ENCODE measurements at regions of chr3 and their contacts with region 1.

Region 1: DNA sequence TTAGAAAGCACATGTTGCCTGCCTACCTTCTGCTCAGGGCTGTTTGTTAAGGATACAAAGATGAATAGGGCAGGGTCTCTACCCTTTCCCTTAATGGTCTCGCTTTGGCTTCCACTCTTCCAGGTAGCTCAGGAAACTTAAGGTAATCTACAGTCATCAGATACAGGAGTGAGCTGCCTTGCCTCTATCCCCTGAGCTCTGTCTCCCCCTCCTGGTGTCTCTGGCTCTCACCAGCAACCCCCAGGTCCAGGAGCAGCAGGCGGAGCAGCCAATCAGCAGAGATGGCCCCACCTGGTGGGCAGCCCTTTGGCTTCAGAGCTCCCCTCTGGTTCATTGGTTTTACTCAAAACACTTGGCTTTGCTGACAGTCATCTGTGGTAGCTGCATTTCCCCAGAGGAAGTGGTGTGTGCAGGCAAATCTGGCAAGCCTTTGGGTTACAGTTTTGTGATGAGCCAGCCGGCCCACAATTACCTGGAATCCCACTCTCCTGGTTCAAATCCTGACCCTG is 8.5 kb upstream of the CX3CR1 start:
- DNase-seq: peak; percentile 90 to 91
- H3K4me3 ChIP-seq: no peak overlapping the region
- H3K27ac ChIP-seq: no peak overlapping the region
- H3K4me1 ChIP-seq: no peaks in the 10 kb centered on the region
- H3K27me3 ChIP-seq: no peaks in the 10 kb centered on the region
- CTCF ChIP-seq: peak; percentile 93 to 99 (median 99)
- EP300 ChIP-seq: no peak
- POLR2A ChIP-seq: no peak
- RAD21 ChIP-seq: peak; percentile 100

Region 2: GRCh38 chr3:39101022-39101689 is 187.2 kb before region 1 on chr3:
- CTCF ChIA-PET with region 1: interaction called, 106 read pairs
- POLR2A ChIA-PET with region 1: interaction called, 3 read pairs
- DNase-seq: peak in 1 of 2 experiments; percentile 58
- H3K4me3 ChIP-seq: no peak overlapping the region
- H3K27ac ChIP-seq: no peak overlapping the region
- H3K4me1 ChIP-seq: no peaks in the 10 kb centered on the region; a peak in 2 of 7 replicates
- H3K27me3 ChIP-seq: peaks cover 0 to 1% (median 0%) of the 10 kb centered on the region in 4 experiments; a peak in 1 of 7 replicates
- CTCF ChIP-seq: peak; percentile 80 to 94 (median 86)
- EP300 ChIP-seq: no peak
- POLR2A ChIP-seq: no peak
- RAD21 ChIP-seq: peak; percentile 70 to 77

Region 3: DNA sequence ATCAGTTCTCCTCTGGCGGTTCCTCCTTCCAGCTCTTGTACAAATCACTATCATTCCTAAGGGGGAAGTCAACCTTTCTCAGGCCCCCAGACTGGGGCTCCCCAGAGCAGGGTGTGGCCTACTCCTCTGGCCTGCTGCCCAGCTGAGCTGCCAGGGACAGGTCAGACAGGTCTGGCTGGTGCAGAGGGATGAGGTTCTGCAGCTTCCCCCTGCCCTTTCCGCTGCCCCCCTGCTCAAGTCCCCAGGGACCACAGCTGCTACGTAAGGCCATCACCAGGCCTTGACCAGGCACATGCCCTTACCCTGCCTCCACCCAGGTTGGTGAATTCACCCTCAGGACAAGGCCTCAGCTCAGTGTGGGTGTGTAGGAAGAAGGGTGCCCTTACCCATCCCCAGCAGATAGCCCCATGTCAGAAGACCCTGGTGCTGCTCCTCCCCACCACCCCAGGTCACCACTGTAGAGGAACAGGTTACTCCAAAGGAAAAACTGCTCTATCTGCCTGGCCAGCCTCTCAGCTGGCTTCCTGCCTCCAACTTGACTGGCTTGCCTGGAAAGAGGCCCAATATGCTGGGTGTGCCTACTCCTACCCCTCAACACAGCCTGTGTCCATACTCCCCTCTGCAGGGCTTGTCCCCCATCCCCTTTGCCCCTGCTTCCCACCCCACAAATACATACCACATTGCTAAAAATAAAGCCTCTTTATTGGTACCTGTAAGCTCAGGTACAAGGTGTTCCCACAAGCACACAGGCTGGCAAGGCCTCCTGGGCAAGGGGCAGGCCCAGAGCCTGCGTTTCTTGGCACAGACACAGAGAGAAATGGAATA is 147.0 kb before region 1 on chr3:
- CTCF ChIA-PET with region 1: interaction called, 43 read pairs
- POLR2A ChIA-PET with region 1: no interaction called
- DNase-seq: no peak
- H3K4me3 ChIP-seq: no peak overlapping the region
- H3K27ac ChIP-seq: no peak overlapping the region; the same call in 1 of the 2 replicates
- H3K4me1 ChIP-seq: peaks cover 0 to 3% (median 0%) of the 10 kb centered on the region in 4 experiments; a peak in 2 of 7 replicates
- H3K27me3 ChIP-seq: no peaks in the 10 kb centered on the region
- CTCF ChIP-seq: no peak
- EP300 ChIP-seq: no peak
- POLR2A ChIP-seq: no peak
- RAD21 ChIP-seq: no peak

Region 4: DNA sequence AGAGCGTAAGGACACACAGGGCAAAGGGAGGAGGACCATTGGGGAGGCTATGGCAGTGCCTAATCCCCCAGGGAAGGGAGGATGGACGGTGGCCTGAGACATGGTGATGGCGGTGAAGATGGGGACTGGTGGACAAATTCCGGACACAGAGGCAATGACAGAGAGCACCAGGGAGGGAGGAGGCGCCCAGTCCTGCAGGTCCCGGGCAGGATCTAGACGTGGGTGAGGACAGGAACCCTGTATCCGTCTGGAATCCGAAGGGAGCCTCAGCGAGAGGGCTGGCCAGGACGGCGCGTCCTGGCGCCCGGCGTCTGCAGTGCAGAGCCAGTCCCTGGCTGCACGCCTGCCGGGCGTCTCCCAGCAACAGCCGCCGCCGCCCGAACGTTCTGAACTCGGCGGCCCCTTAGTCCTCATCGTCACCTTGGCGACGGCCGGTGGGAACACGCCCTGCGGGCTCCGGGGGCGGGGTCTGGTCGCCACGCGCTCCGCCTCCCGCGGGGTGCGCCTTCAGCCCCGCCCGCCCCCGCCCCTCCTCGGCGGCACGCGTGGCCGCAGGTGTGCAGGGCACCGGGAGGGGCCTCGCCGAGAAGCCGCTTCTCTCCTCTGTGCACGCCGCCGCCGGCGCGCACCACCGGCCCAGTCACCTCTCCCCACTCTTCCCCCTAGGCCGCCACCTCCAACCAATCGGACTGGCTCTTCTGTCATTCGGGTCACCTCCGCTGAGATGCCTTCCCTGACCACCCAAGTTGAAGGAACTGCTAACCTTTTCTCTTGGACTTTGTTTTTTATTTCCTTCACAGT is 107.6 kb before region 1 on chr3:
- CTCF ChIA-PET with region 1: interaction called, 767 read pairs
- POLR2A ChIA-PET with region 1: no interaction called
- DNase-seq: peak; percentile 62 to 94
- H3K4me3 ChIP-seq: peak overlapping the region; percentile 26 to 61 (median 52)
- H3K27ac ChIP-seq: no peak overlapping the region
- H3K4me1 ChIP-seq: peaks cover 4 to 20% (median 13%) of the 10 kb centered on the region in 4 experiments
- H3K27me3 ChIP-seq: peaks cover 0 to 12% (median 10%) of the 10 kb centered on the region in 4 experiments; a peak in 6 of 7 replicates
- CTCF ChIP-seq: no peak
- EP300 ChIP-seq: no peak
- POLR2A ChIP-seq: no peak
- RAD21 ChIP-seq: no peak; a peak in 1 of 4 replicates

Region 5: GRCh38 chr3:39208463-39209055 is 79.8 kb before region 1 on chr3:
- CTCF ChIA-PET with region 1: interaction called, 198 read pairs
- POLR2A ChIA-PET with region 1: interaction called, 4 read pairs
- DNase-seq: no peak
- H3K4me3 ChIP-seq: no peak overlapping the region
- H3K27ac ChIP-seq: no peak overlapping the region
- H3K4me1 ChIP-seq: peaks cover 0 to 11% (median 6%) of the 10 kb centered on the region in 4 experiments; a peak in 5 of 7 replicates
- H3K27me3 ChIP-seq: no peaks in the 10 kb centered on the region
- CTCF ChIP-seq: peak; percentile 66 to 76 (median 67)
- EP300 ChIP-seq: no peak
- POLR2A ChIP-seq: no peak
- RAD21 ChIP-seq: peak; percentile 58 to 71

Region 6: DNA sequence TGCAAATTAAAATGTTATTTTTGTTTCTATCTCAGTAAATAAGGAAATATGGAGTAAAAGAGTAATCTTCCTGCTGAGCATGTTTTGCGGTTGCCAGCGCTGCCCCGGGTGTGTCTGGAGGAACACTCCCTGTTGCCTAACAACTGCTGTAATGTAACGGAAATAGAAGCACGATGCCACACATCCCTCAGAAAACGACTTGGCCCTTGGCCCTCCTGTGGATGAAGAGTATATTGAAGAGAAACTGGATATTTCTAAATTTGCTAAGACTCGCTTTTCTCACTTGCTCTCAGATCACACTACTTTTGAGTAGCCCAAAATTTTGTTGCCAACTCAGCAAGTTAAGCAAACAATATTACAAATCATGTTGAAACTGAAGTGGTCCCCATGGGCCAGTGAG is 27.4 kb before region 1 on chr3:
- CTCF ChIA-PET with region 1: interaction called, 21 read pairs
- POLR2A ChIA-PET with region 1: no interaction called
- DNase-seq: no peak
- H3K4me3 ChIP-seq: no peak overlapping the region
- H3K27ac ChIP-seq: no peak overlapping the region
- H3K4me1 ChIP-seq: no peaks in the 10 kb centered on the region
- H3K27me3 ChIP-seq: no peaks in the 10 kb centered on the region
- CTCF ChIP-seq: peak in 2 of 3 experiments; percentile 28 to 34; a peak in 2 of 4 replicates
- EP300 ChIP-seq: no peak
- POLR2A ChIP-seq: no peak
- RAD21 ChIP-seq: peak; percentile 26 to 29; a peak in 2 of 4 replicates

Region 7: DNA sequence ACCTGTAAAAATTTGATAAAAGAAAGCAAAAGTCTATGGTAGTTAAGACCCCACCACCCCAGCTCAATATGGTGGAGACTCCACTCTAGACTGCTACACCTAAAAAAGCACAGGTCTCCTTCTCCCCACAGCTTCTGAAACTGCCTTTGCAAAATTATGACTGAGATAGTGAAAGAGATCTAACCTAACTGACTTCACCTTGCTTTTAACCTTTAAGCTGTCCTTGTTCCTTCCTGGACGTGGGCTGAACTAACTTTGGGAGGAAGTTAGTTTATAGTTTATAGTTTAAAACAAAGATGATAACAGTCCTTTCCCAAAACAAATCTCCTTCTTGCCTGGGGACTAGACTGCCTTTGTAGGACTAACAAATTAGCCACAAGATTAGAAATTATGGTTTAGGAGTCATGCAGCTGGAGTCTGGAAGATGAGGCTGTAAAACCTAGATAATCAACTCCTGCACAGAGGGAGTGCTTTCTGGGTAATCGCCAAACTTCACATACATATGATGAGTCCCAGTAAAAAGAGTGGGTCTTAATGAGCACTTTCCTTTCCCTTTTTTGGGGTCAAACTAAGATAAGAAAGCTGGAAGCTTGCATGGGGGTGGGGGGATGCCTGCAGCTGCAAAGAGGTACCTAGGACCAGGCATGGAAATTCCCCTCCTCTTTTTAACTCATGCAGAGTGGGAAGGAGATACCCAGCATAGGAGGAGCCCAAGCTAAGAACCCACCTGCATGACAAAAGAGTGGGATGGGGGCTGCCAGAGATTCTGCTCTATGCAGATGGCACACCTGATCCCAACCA is 58.6 kb after region 1 on chr3:
- CTCF ChIA-PET with region 1: interaction called, 11 read pairs
- POLR2A ChIA-PET with region 1: no interaction called
- DNase-seq: no peak
- H3K4me3 ChIP-seq: no peak overlapping the region
- H3K27ac ChIP-seq: no peak overlapping the region
- H3K4me1 ChIP-seq: peaks cover 0 to 4% (median 1%) of the 10 kb centered on the region in 4 experiments; a peak in 2 of 7 replicates
- H3K27me3 ChIP-seq: no peaks in the 10 kb centered on the region
- CTCF ChIP-seq: no peak
- EP300 ChIP-seq: no peak
- POLR2A ChIP-seq: no peak
- RAD21 ChIP-seq: no peak

Region 8: GRCh38 chr3:39443530-39443929 is 155.2 kb after region 1 on chr3:
- CTCF ChIA-PET with region 1: no interaction called
- POLR2A ChIA-PET with region 1: no interaction called
- DNase-seq: peak; percentile 21 to 56
- H3K4me3 ChIP-seq: no peak overlapping the region
- H3K27ac ChIP-seq: no peak overlapping the region
- H3K4me1 ChIP-seq: no peaks in the 10 kb centered on the region
- H3K27me3 ChIP-seq: no peaks in the 10 kb centered on the region
- CTCF ChIP-seq: peak; percentile 65 to 75 (median 70)
- EP300 ChIP-seq: no peak
- POLR2A ChIP-seq: no peak
- RAD21 ChIP-seq: peak; percentile 66 to 75

Measured in H1 (cell line).